Posterior vena cava (tissue), 2 donors: ENCODE measurements at regions of chr20 and their contacts with region 1.

Region 1: DNA sequence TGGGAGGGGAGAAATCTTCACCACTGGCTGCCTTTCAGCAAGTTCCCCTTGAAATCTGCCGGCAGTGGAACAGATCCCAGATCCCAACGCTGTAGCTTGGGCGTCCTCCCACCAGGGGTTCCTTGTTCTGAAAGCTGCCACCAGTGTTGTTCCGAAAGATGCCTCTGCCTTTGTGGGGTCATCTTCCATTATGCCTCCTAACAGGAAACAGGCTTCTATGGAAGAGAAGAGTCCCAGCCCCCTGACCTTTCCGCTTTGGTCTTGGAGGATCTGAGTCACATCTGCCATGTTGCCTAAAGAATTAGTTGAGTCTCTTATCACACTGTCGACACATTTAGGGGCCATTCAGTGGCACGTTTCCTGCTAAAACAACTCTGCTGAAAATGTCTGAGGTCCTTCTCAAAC is 57.5 kb upstream of the NFATC2 start:
- DNase-seq: no peak

Region 2: GRCh38 chr20:51372176-51372803 is 227.7 kb before region 1 on chr20:
- intact Hi-C with region 1: loop called in 1 of 2 experiments (anchors 2 kb)
- DNase-seq: peak; percentile 85